Activated T-helper 1 cell treated with anti-CD3 and anti-CD28 coated beads, Interleukin-12 subunit alpha, Interleukin-12 subunit beta, Interleukin-2, Interleukin-4 antibody, amounts not matched to agents 30 ng/mL and 10 ng/mL and 1 ng/mL, durations not matched to agents 14 hours and 24 hours and 36 hours (primary cell): ENCODE measurements at regions of chr22 and their contacts with region 1.

Region 1: DNA sequence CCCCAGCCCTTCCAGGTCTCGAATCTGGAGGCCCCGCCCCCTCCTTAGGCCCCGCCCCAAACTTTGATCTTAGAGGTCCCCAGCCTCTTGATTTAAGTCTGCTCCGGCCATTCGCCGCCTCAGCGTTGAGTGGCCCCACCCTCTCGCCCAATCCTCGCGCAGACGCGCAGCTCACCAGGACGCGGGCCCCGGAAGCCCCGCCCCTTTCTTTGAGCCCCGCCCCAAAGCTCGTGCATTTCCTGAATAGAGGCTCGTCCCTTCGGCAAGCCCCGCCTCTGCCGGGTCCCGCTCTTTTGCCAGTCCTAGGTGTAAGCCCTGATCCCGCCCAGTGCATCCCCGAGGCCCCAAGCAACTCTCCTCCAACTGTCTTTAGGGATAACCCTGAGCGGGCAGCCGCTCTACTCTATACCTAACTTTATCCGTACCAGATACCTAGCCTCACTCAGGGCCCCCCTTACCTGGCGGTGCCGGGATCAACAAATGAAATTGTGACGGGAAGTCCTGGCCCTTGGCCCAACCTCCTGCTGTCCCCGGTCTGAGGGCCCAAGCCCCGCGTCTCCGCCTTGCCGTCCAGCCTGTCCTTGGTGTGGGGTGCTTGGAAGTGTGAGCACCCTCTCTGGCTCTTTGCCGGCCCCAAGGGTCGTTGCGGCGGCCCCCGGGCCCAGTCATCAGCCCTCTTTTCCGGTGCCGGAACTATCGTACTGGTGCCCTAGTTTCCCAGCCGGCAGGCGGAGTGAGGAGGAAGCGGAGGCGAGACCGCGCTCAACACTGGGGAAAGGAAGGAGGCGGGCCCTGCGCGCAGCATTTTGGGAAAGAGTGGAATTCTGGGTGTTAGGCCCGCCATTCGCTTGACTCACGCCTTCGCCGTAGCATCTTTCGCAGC is at the start of gene SNRPD3:
- DNase-seq: peak; percentile 97
- H3K4me3 Mint-ChIP-seq: peak within 1 kb of the TSS; percentile 98
- H3K27ac Mint-ChIP-seq: peak within 1 kb of the TSS; percentile 97
- H3K4me1 Mint-ChIP-seq: peaks cover 64% of the 10 kb centered on the region
- H3K27me3 Mint-ChIP-seq: no peaks in the 10 kb centered on the region
- total RNA-seq, gene SNRPD3: 155 and 158 TPM in 2 replicates

Region 2: DNA sequence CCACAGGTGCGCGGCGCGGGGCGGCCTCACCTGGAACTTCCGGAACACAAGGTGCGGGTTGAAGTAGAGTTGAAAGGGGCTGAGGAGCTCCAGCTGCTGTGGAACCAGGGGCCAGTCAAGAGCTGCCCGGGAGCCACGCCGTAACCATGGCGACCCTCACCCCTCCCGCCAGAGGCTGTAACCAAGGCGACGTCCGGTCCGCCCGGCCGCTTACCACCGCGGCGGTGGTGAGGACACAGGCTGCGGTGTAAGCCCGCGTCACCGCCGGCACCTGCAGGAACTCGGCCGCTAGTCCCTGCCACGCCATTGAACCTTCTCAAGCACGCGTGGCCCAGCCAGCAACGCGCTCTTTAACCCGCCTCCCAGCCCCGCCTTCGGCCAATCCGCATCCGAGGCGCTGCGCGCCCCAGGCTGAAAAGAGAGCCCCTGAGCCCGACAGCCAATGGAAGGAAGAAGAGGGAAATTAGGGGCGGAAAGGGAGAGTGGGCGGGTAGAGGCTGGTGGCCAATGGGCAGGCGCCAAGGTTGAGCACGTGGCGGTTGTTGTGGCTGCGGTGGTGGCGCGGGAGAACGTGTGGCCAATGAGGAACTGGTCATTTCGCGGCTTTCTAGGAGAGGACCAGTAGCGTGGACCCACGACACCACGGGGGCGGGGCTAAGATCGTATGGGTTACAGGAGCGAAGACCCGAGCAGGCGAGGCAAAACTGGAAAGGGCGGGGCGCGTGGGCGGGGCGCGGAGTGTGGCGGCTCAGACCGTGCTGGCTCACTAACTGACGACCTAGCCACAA is 716.5 kb before region 1 on chr22 and contains the start of gene DERL3:
- intact Hi-C with region 1: loop called (anchors 1 kb)
- DNase-seq: peak; percentile 97
- H3K4me3 Mint-ChIP-seq: peak within 1 kb of the TSS; percentile 93
- H3K27ac Mint-ChIP-seq: peak within 1 kb of the TSS; percentile 97
- H3K4me1 Mint-ChIP-seq: peaks cover 27% of the 10 kb centered on the region
- H3K27me3 Mint-ChIP-seq: peaks cover 3% of the 10 kb centered on the region
- total RNA-seq, gene DERL3: 13.8 and 18.8 TPM in 2 replicates

Region 3: GRCh38 chr22:23913661-23914353 is 641.6 kb before region 1 on chr22:
- intact Hi-C with region 1: loop called (anchors 2 kb)
- DNase-seq: peak; percentile 100
- H3K4me3 Mint-ChIP-seq: peak overlapping the region; percentile 95
- H3K27ac Mint-ChIP-seq: peak overlapping the region; percentile 97
- H3K4me1 Mint-ChIP-seq: peaks cover 24% of the 10 kb centered on the region
- H3K27me3 Mint-ChIP-seq: no peaks in the 10 kb centered on the region

Region 4: DNA sequence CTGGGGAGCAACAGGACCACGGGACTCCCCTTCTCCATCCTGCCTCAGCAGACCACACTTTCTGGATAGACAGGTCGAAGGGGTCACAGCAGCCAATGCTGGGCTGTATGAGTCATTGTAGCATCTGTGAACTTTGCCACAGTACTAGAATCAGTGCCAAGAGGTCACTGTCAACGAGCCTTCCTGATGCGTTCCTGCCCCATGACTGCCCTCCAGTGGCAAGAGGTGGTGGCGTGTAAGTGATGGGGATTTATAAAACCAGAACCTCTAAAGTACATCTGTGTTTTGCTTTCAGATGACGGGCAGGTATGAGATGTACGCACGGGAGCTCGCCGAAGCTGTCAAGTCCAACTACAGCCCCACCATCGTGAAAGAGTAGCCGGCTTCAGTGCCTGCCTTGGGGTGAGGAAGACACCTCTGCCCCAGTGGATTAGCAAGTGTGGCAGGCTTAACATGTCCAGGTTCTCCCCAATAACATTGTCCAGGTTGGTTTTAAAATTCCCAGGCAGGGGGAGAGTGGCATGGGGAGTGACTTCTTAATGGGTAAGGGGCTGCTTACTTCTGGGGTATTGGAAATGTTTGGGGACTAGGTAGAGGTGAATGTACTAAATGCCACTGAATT is 29.9 kb before region 1 on chr22:
- intact Hi-C with region 1: loop called (anchors 1 kb)
- DNase-seq: peak; percentile 73
- H3K4me3 Mint-ChIP-seq: no peak overlapping the region
- H3K27ac Mint-ChIP-seq: no peak overlapping the region
- H3K4me1 Mint-ChIP-seq: peaks cover 14% of the 10 kb centered on the region
- H3K27me3 Mint-ChIP-seq: peaks cover 2% of the 10 kb centered on the region

Region 5: GRCh38 chr22:24758164-24758799 is 202.9 kb after region 1 on chr22:
- intact Hi-C with region 1: loop called (anchors 10 kb)
- DNase-seq: peak; percentile 13
- H3K4me3 Mint-ChIP-seq: no peak overlapping the region
- H3K27ac Mint-ChIP-seq: no peak overlapping the region
- H3K4me1 Mint-ChIP-seq: no peaks in the 10 kb centered on the region
- H3K27me3 Mint-ChIP-seq: peaks cover 15% of the 10 kb centered on the region